Natural killer cell (primary cell): ENCODE measurements at regions of chr2 and their contacts with region 1.

Region 1: DNA sequence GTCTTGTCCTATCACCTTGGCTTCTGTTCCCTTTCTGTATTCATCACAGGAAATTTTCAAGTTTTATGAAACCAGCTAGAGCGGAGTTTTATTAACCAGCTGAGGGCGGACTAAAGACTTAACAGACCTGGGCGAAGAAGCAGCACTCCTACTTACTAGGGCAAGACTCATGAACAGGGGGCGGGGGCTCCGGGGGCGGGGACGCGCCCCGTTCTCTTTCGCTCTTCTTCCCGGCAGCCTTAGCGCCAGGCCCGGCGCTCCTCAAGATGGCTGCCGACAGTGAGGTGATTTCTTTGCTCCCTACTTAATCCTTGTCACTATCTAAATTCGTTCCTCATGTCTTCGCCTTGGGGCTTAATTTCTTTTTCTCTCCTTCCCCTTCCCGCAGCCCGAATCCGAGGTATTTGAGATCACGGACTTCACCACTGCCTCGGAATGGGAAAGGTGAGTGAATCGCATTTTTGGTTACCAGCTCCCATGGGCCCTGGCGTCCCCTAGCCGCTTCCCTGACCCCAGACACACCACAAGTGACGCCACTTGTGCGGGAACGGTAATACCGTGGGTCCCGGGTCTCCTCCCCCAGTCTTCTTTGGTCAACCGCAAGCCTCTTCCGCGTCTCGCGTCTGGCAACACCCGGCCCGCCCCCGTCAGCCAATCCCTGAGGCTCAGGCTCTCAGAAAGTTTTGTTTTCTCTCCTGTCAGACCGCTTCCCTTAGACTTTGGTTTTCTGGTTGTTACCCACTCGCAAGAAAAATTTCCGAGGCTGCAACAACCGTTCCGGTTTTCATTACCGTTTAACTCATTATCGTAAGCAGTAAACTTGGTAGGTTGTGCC is at the start of gene RAB3GAP1:
- DNase-seq: peak; percentile 85 to 96
- ATAC-seq: peak; percentile 82 to 92 (median 90)
- H3K4me3 ChIP-seq: peak within 1 kb of the TSS; percentile 58
- H3K4me3 Mint-ChIP-seq: peak within 1 kb of the TSS; percentile 97
- H3K27ac ChIP-seq: peak within 1 kb of the TSS; percentile 90
- H3K27ac Mint-ChIP-seq: peak within 1 kb of the TSS; percentile 96 to 98
- H3K4me1 ChIP-seq: peaks cover 7% of the 10 kb centered on the region
- H3K4me1 Mint-ChIP-seq: peaks cover 20 to 29% of the 10 kb centered on the region in 2 donors
- H3K27me3 ChIP-seq: peaks cover 13% of the 10 kb centered on the region
- H3K27me3 Mint-ChIP-seq: peaks cover 42 to 53% of the 10 kb centered on the region in 2 donors
- CTCF ChIP-seq: no peak
- total RNA-seq, gene RAB3GAP1: 9.6 to 12.6 (median 9.8) TPM

Region 2: DNA sequence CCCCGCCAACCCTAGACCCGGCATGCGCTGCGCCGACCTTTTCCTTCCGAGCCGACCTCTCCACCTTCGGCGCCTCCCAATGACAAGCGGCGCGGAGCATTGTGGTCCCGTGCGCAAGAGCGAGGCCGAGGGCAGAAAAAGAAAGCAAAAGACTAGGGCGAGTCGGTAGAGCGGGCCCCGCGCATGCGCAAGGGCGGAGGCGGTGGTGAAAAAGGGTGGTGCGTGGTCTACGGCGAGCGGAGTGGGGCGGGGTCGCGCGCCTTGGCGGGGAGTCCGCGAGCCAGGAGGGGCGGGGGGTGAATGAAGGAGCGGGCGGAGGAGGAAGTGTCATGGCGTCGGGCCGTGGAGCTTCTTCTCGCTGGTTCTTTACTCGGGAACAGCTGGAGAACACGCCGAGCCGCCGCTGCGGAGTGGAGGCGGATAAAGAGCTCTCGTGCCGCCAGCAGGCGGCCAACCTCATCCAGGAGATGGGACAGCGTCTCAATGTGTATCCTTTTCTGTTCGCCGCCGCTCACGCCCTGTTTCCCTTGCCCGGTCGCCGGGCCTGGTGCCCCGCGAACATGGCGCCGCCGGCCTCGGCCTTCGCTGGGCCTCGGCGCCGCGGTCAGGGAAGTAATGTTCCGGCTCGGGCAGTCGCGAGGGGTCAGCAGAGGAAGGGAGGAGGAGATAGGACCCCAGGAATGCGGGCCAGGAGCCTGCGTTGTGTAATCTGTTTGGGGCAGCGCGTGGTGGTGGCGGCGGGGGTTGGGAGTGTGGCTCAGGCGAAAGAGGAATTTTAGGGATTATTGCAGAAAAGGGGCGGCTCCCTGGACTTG is 133.5 kb before region 1 on chr2 and contains the start of gene CCNT2:
- intact Hi-C with region 1: loop called (anchors 1 kb)
- DNase-seq: peak; percentile 99 to 100
- ATAC-seq: peak; percentile 81 to 93 (median 82)
- H3K4me3 ChIP-seq: peak within 1 kb of the TSS; percentile 92
- H3K4me3 Mint-ChIP-seq: peak within 1 kb of the TSS; percentile 99
- H3K27ac ChIP-seq: peak within 1 kb of the TSS; percentile 98
- H3K27ac Mint-ChIP-seq: peak within 1 kb of the TSS; percentile 93 to 100
- H3K4me1 ChIP-seq: peaks cover 22% of the 10 kb centered on the region
- H3K4me1 Mint-ChIP-seq: peaks cover 46 to 56% of the 10 kb centered on the region in 2 donors
- H3K27me3 ChIP-seq: no peaks in the 10 kb centered on the region
- H3K27me3 Mint-ChIP-seq: peaks cover 4 to 9% of the 10 kb centered on the region in 2 donors
- CTCF ChIP-seq: no peak
- total RNA-seq, gene CCNT2: 86.9 to 93.1 (median 87.8) TPM

Region 3: DNA sequence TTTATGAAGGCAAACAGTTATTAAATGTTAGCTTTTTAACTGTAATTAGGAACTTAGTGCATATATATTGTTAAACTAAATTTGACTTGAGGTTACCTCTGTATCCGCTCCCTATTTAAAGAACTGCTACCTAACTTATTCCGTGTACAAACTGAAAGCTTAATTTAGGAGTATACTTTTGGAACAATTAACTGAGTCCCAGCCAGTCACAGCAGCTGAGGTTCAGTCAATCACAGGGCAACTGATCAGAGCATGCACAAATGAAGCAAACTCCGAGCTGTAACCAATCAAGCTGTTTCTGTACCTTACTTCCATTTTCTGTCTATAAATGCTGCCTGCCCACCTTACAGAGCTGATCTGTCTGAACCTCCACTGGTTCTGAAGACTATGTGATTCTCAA is 61.1 kb after region 1 on chr2:
- intact Hi-C with region 1: loop called (anchors 1 kb)
- DNase-seq: no peak
- ATAC-seq: no peak
- H3K4me3 ChIP-seq: no peak overlapping the region
- H3K4me3 Mint-ChIP-seq: peak overlapping the region; percentile 74
- H3K27ac ChIP-seq: no peak overlapping the region
- H3K27ac Mint-ChIP-seq: peak overlapping the region in 1 of 2 donors; percentile 79
- H3K4me1 ChIP-seq: peaks cover 14% of the 10 kb centered on the region
- H3K4me1 Mint-ChIP-seq: peaks cover 19% of the 10 kb centered on the region in 2 donors
- H3K27me3 ChIP-seq: peaks cover 4% of the 10 kb centered on the region
- H3K27me3 Mint-ChIP-seq: peaks cover 24 to 37% of the 10 kb centered on the region in 2 donors
- CTCF ChIP-seq: no peak

Region 4: GRCh38 chr2:135531231-135532228 is 479.3 kb after region 1 on chr2 and contains the start of gene R3HDM1:
- intact Hi-C with region 1: loop called (anchors 1 kb)
- DNase-seq: peak; percentile 88 to 99
- ATAC-seq: peak; percentile 80 to 93 (median 82)
- H3K4me3 ChIP-seq: peak within 1 kb of the TSS; percentile 79
- H3K4me3 Mint-ChIP-seq: no peak within 1 kb of the TSS
- H3K27ac ChIP-seq: peak within 1 kb of the TSS; percentile 92
- H3K27ac Mint-ChIP-seq: no peak within 1 kb of the TSS
- H3K4me1 ChIP-seq: peaks cover 7% of the 10 kb centered on the region
- H3K4me1 Mint-ChIP-seq: peaks cover 10 to 20% of the 10 kb centered on the region in 2 donors
- H3K27me3 ChIP-seq: no peaks in the 10 kb centered on the region
- H3K27me3 Mint-ChIP-seq: no peaks in the 10 kb centered on the region
- CTCF ChIP-seq: no peak
- total RNA-seq, gene R3HDM1: 34.9 to 48.6 (median 39.7) TPM

Region 5: GRCh38 chr2:135741395-135742324 is 689.4 kb after region 1 on chr2 and contains the start of gene UBXN4:
- intact Hi-C with region 1: loop called (anchors 1 kb)
- DNase-seq: peak; percentile 84 to 98
- ATAC-seq: peak; percentile 86 to 97 (median 90)
- H3K4me3 ChIP-seq: peak within 1 kb of the TSS; percentile 100
- H3K4me3 Mint-ChIP-seq: peak within 1 kb of the TSS; percentile 95
- H3K27ac ChIP-seq: peak within 1 kb of the TSS; percentile 100
- H3K27ac Mint-ChIP-seq: peak within 1 kb of the TSS; percentile 95 to 96
- H3K4me1 ChIP-seq: no peaks in the 10 kb centered on the region
- H3K4me1 Mint-ChIP-seq: peaks cover 34 to 41% of the 10 kb centered on the region in 2 donors
- H3K27me3 ChIP-seq: no peaks in the 10 kb centered on the region
- H3K27me3 Mint-ChIP-seq: no peaks in the 10 kb centered on the region
- CTCF ChIP-seq: peak; percentile 22
- total RNA-seq, gene UBXN4: 129 to 153 (median 150) TPM

Region 6: GRCh38 chr2:136129601-136130000 is 1077.3 kb after region 1 on chr2:
- intact Hi-C with region 1: loop called (anchors 5 kb)
- DNase-seq: peak in 1 of 2 donors; percentile 91
- ATAC-seq: peak; percentile 48 to 72 (median 69)
- H3K4me3 ChIP-seq: no peak overlapping the region
- H3K4me3 Mint-ChIP-seq: peak overlapping the region; percentile 75
- H3K27ac ChIP-seq: peak overlapping the region; percentile 90
- H3K27ac Mint-ChIP-seq: peak overlapping the region; percentile 93 to 99
- H3K4me1 ChIP-seq: peaks cover 86% of the 10 kb centered on the region
- H3K4me1 Mint-ChIP-seq: peaks cover 54 to 81% of the 10 kb centered on the region in 2 donors
- H3K27me3 ChIP-seq: no peaks in the 10 kb centered on the region
- H3K27me3 Mint-ChIP-seq: peaks cover 3 to 6% of the 10 kb centered on the region in 2 donors
- CTCF ChIP-seq: no peak